ENCODE measurements at regions of chr3 and their contacts with region 1.

Region 1: GRCh38 chr3:94028093-94028833 is at the start of gene STX19:
- DNase-seq: peak; percentile 44
- H3K4me3 Mint-ChIP-seq: peak within 1 kb of the TSS; percentile 69
- H3K27ac Mint-ChIP-seq: peak within 1 kb of the TSS; percentile 96
- H3K4me1 Mint-ChIP-seq: no peaks in the 10 kb centered on the region
- H3K27me3 Mint-ChIP-seq: no peaks in the 10 kb centered on the region
- CTCF ChIP-seq: no peak
- total RNA-seq, gene STX19: 5.1 and 5.2 TPM in 2 replicates

Region 2: GRCh38 chr3:93973131-93974126 is 54.8 kb before region 1 on chr3 and contains the start of gene PROS1:
- CTCF ChIA-PET with region 1: no interaction called
- intact Hi-C with region 1: loop called (anchors 5 kb)
- DNase-seq: peak; percentile 49
- H3K4me3 Mint-ChIP-seq: peak within 1 kb of the TSS; percentile 93
- H3K27ac Mint-ChIP-seq: peak within 1 kb of the TSS; percentile 58
- H3K4me1 Mint-ChIP-seq: no peaks in the 10 kb centered on the region
- H3K27me3 Mint-ChIP-seq: peaks cover 10% of the 10 kb centered on the region
- CTCF ChIP-seq: no peak
- total RNA-seq, gene PROS1: 1.3 and 2.6 TPM in 2 replicates

Region 3: GRCh38 chr3:94062431-94063404 is 34.5 kb after region 1 on chr3 and contains the starts of genes DHFR2 and NSUN3:
- CTCF ChIA-PET with region 1: interaction called, 3 read pairs
- intact Hi-C with region 1: loop called (anchors 5 kb)
- DNase-seq: peak; percentile 86
- H3K4me3 Mint-ChIP-seq: peak within 1 kb of the TSS; percentile 94
- H3K27ac Mint-ChIP-seq: peak within 1 kb of the TSS; percentile 98
- H3K4me1 Mint-ChIP-seq: peaks cover 17% of the 10 kb centered on the region
- H3K27me3 Mint-ChIP-seq: no peaks in the 10 kb centered on the region
- CTCF ChIP-seq: no peak
- total RNA-seq, gene DHFR2: 5.0 and 5.4 TPM in 2 replicates
- total RNA-seq, gene NSUN3: 10.1 and 13.6 TPM in 2 replicates

Measured in Calu3 (cell line).